ENCODE measurements at regions of chr19 and their contacts with region 1.

Region 1: DNA sequence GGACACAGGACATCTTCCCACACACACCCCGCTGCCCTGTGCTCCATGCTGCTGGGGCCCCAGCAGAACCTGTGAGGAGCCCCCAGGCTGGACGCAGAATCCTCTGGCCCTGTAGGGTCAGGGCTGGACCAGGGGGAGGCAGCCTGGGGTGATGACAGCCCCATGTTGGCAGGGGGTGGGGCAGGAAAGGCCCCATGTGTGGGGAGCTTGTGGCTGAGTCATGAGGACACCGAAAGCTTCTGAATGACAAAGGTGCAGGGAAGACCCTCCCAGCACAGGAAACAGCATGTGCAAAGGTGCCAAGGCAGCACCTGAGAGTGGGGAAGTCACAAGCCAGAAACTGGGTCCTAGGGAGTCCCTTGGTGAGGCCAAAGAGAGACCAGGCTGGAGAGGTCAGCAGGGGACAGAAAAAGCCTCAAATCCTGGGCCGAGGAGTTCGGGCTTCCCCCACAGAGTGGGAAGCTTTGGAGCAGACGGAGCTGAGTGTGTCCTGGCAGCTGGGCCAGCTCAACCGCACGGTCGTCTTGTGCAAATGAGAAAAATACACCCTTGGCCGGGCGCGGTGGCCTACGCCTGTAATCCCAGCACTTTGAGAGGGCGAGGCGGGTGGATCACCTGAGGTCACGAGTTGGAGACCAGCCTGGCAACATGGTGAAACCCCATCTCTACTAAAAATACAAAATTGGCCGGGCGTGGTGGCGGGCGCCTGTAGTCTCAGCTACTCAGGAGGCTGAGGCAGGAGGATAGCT is 17.5 kb downstream of the ATP8B3 start:
- DNase-seq: no peak
- H3K4me3 ChIP-seq: no peak overlapping the region
- H3K27ac ChIP-seq: no peak overlapping the region
- H3K4me1 ChIP-seq: peaks cover 0 to 11% (median 8%) of the 10 kb centered on the region in 4 experiments
- H3K27me3 ChIP-seq: peaks cover 0 to 24% (median 2%) of the 10 kb centered on the region in 5 experiments

Region 2: DNA sequence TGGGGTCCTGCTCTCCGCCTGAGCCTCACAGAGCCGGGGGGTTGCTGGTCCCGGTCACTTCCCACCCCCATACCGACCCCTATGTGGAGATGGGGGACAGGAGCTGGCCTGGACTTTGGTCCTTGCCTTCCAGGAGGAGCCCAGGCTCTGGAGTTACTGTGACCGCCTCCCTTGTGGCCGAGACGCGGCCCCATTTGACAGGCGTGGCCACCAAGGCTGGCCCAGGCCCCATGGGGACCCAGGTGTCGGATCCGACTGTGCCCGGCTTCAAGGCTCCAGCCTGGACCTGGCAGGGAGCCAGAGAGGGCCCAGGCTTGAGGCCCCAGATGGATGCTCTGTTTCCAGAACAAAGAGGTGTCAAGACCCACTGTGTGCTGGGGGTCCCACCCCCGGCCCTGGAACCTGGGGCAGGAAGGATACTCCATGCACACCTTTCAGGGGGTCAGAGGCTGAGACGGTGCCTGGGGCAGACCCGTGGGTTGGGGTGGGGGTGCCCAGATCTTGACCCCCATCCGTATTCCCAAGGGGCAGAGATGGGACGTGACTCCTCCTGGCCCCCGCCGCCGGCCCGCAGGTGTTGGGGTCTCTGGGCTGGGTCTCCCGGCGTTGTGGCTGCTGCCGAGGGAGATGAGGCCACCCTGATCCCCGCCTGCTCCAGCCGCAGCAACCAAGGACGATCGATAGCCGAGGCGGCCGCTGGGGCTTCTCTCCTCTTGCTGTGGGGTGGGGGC is 94.4 kb before region 1 on chr19:
- CTCF ChIA-PET with region 1: no interaction called
- POLR2A ChIA-PET with region 1: no interaction called
- DNase-seq: no peak
- H3K4me3 ChIP-seq: no peak overlapping the region
- H3K27ac ChIP-seq: no peak overlapping the region
- H3K4me1 ChIP-seq: peaks cover 0 to 12% (median 12%) of the 10 kb centered on the region in 4 experiments
- H3K27me3 ChIP-seq: peaks cover 0 to 30% (median 18%) of the 10 kb centered on the region in 5 experiments

Region 3: DNA sequence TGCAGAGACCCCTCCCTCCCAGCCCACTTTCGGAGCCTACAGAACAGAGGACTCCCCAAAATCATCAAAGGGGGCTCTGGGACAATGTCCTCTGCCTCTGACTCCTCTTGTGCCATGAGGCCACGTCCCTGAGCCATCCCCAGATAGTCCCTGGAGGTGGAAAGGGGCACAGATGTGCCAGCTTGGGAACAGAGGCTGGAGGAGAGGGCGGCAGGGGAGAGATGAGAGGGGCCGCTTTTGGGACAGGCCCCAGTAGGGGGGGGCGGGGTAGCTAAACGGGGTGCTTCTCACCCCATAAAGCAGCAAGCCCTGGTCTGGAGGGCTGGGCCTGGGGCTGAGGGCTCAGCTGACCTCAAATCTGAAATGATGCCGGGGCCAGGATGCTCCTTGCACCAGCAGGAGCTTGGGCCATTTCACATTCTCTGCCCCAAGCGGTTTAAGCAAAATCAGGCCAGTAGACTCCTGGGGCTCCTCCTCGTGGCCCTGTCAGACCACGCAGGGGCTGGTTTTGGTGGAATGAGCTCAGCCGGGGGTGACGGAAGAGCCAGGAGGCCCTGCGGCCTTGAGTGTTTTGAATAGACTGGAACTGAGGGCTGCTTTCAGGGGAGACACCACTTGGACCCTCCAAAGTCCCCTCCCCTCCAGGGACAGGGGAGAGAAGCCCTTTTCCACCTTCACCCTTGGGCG is 14.2 kb before region 1 on chr19:
- CTCF ChIA-PET with region 1: interaction called, 63 read pairs
- POLR2A ChIA-PET with region 1: no interaction called
- DNase-seq: peak; percentile 64 to 80 (median 71)
- H3K4me3 ChIP-seq: no peak overlapping the region
- H3K27ac ChIP-seq: no peak overlapping the region
- H3K4me1 ChIP-seq: peaks cover 0 to 7% (median 2%) of the 10 kb centered on the region in 4 experiments
- H3K27me3 ChIP-seq: peaks cover 4 to 92% (median 28%) of the 10 kb centered on the region in 5 experiments

Region 4: GRCh38 chr19:1812469-1813196 is 18.0 kb after region 1 on chr19:
- CTCF ChIA-PET with region 1: interaction called, 16 read pairs
- POLR2A ChIA-PET with region 1: no interaction called
- DNase-seq: peak; percentile 94 to 97 (median 97)
- H3K4me3 ChIP-seq: peak overlapping the region; percentile 34 to 89 (median 69)
- H3K27ac ChIP-seq: peak overlapping the region in 1 of 2 experiments; percentile 58
- H3K4me1 ChIP-seq: peaks cover 0 to 25% (median 22%) of the 10 kb centered on the region in 4 experiments
- H3K27me3 ChIP-seq: no peaks in the 10 kb centered on the region

Measured in common myeloid progenitor, CD34-positive (primary cell).